Right cardiac atrium (tissue), 5 donors: ENCODE measurements at regions of chr7 and their contacts with region 1.

Region 1: GRCh38 chr7:20786779-20787659 is at the start of gene SP8:
- DNase-seq: peak in 1 of 3 donors; percentile 57
- ATAC-seq: peak; percentile 31 to 48
- H3K4me3 ChIP-seq: peak within 1 kb of the TSS; percentile 64
- H3K27ac ChIP-seq: no peak within 1 kb of the TSS
- H3K4me1 ChIP-seq: peaks cover 5% of the 10 kb centered on the region
- H3K27me3 ChIP-seq: peaks cover 2% of the 10 kb centered on the region
- total RNA-seq, gene SP8: not detected

Region 2: GRCh38 chr7:20722941-20723340 is 64.1 kb before region 1 on chr7:
- intact Hi-C with region 1: no loop called
- DNase-seq: no peak
- ATAC-seq: no peak
- H3K4me3 ChIP-seq: no peak overlapping the region
- H3K27ac ChIP-seq: no peak overlapping the region
- H3K4me1 ChIP-seq: no peaks in the 10 kb centered on the region
- H3K27me3 ChIP-seq: no peaks in the 10 kb centered on the region

Region 3: DNA sequence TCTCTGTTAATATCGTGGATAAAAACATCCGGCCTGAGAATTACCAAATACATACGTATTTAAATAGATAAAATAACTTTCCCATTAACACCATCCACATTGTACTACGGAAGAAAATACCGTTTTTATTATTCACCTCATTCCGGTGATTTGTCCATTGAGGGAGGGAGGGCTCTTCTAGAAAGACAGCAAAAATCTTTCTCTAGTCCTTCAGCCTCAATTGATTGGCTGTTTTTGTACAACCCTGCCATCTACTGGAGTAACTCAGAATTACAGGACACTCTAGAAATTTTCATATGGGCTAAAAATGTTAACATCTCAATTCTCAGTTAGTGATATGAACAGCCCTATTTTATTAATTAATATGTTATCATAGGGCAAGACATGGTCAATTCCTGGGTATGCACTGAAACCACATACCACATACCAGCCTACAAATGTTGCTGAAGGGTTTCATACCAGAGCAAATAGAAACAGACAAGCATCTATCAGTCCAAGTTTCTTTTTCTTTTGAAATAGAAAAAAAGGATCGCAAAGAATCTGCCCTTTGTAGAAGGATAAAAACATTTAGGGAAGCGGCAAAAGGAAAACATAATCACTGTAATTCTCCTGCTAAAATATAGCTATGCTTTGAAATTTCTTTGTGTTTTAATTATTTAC is 1214.5 kb after region 1 on chr7:
- intact Hi-C with region 1: loop called in 1 of 4 experiments (anchors 10 kb)
- DNase-seq: no peak
- ATAC-seq: peak in 1 of 2 donors; percentile 59
- H3K4me3 ChIP-seq: no peak overlapping the region
- H3K27ac ChIP-seq: no peak overlapping the region
- H3K4me1 ChIP-seq: no peaks in the 10 kb centered on the region
- H3K27me3 ChIP-seq: no peaks in the 10 kb centered on the region